Heart left ventricle (tissue), 16 donors: ENCODE measurements at regions of chrX and their contacts with region 1.

Region 1: GRCh38 chrX:111543212-111543762 is 31.8 kb downstream of the SERTM2 start:
- DNase-seq: no peak
- ATAC-seq: no peak
- H3K4me3 ChIP-seq: no peak overlapping the region
- H3K27ac ChIP-seq: no peak overlapping the region
- H3K4me1 ChIP-seq: no peaks in the 10 kb centered on the region
- H3K27me3 ChIP-seq: no peaks in the 10 kb centered on the region
- CTCF ChIP-seq: no peak
- POLR2A ChIP-seq: no peak

Region 2: DNA sequence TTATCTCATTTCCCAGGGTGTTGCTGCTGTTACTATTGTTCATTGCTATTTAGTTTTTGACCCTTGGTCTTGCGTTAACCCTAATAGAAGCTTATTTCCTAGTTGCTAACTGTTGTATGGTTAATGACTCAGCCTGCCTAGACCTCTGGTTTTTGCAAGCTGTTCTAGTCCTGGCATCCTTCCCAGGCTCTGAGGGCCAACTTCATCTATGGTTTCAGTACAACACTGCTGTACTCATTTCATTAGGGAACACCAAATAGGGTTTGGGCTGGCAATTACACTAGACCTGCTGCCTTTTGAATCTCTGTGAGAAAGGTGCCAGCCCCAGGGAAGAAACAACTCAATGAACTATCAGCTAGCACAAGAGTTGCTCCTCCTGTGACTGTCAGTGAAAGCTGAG is 190.9 kb before region 1 on chrX:
- intact Hi-C with region 1: loop called in 1 of 10 experiments (anchors 5 kb)
- DNase-seq: peak; percentile 29 to 66 (median 33)
- ATAC-seq: peak; percentile 56 to 71 (median 68)
- H3K4me3 ChIP-seq: no peak overlapping the region
- H3K27ac ChIP-seq: no peak overlapping the region
- H3K4me1 ChIP-seq: peaks cover 0 to 7% (median 0%) of the 10 kb centered on the region in 12 donors
- H3K27me3 ChIP-seq: no peaks in the 10 kb centered on the region
- CTCF ChIP-seq: no peak
- POLR2A ChIP-seq: no peak

Region 3: GRCh38 chrX:112211459-112211858 is 668.2 kb after region 1 on chrX:
- intact Hi-C with region 1: no loop called
- DNase-seq: no peak
- ATAC-seq: no peak
- H3K4me3 ChIP-seq: no peak overlapping the region
- H3K27ac ChIP-seq: no peak overlapping the region
- H3K4me1 ChIP-seq: no peaks in the 10 kb centered on the region
- H3K27me3 ChIP-seq: peaks cover 0 to 13% (median 0%) of the 10 kb centered on the region in 9 donors
- CTCF ChIP-seq: no peak
- POLR2A ChIP-seq: no peak